Left lung (tissue), 14 donors: ENCODE measurements at regions of chr2 and their contacts with region 1.

Region 1: GRCh38 chr2:158024288-158024898 is 77.3 kb upstream of the UPP2 start:
- DNase-seq: no peak
- ATAC-seq: peak; percentile 84
- H3K4me3 ChIP-seq: no peak overlapping the region
- H3K27ac ChIP-seq: no peak overlapping the region
- H3K4me1 ChIP-seq: no peaks in the 10 kb centered on the region
- H3K27me3 ChIP-seq: no peaks in the 10 kb centered on the region
- CTCF ChIP-seq: peak; percentile 72 to 79

Region 2: DNA sequence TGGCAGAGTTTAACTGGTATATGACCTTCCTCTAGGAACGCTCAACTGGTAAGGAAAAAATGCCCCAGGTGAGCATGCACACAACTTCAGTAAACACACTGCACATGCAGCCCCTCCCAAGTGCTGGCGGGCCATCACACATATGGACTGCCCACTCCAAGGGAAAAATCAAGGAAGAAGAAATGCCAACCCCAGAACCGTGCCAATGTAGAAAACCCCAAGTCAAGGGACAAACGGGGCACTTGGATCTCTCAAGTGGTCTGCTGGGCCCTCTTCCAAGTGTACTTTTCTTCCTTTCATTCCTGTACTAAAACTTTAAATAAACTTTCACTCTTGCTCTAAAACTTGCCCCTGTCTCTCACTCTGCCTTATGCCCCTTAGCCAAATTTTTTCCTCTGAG is 71.8 kb before region 1 on chr2:
- intact Hi-C with region 1: no loop called
- DNase-seq: peak in 1 of 4 donors; percentile 37
- ATAC-seq: peak; percentile 64
- H3K4me3 ChIP-seq: no peak overlapping the region
- H3K27ac ChIP-seq: no peak overlapping the region
- H3K4me1 ChIP-seq: no peaks in the 10 kb centered on the region
- H3K27me3 ChIP-seq: no peaks in the 10 kb centered on the region
- CTCF ChIP-seq: no peak

Region 3: DNA sequence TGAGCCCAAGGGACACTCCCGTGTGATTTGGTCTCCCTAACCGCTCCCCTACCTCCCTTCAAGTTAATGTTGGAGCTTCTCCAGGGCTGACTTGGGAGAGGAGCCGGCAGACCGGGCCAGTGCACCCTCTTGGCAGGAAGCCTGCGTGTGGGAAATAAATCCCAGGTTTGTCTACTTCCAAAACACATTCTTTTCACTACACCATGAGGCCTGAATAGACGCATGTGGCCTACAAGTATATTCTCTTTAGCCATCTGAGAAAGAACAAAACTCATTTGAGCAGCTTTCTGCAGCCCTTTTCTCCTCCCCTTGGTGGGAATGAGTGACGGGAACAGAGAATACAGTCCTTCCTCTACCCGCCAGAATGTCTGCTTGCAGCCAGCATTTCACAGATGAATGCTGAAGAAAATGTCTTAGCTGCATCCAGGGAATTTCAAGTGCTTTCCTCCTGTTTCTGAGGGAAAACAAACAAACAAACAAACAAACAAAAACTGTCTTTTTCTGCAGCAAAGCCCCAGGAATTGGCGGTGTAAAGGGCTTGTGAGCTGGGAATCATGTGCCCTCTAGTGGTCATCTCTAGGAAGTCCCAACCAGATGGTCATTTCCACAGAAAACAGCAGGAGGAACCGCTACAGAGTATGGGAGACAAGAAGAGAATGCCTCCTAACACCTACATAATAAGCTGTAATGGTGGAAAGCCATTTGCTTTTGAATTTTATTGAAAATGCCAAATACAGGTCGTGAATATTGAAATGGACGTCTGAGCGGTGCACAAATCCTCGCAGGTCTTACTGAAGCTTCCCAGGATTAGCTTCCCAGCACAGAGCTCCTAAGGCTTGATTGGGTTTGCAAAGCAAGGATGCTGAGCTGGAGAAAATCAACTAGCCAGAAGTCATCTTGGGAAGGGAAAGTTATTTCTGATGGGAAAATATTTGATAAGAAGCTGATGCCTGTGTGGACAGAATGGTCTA is 729.5 kb after region 1 on chr2:
- intact Hi-C with region 1: loop called in 1 of 2 experiments (anchors 5 kb)
- DNase-seq: peak in 2 of 4 donors; percentile 69 to 80
- ATAC-seq: peak; percentile 96
- H3K4me3 ChIP-seq: no peak overlapping the region
- H3K27ac ChIP-seq: no peak overlapping the region
- H3K4me1 ChIP-seq: peaks cover 0 to 5% of the 10 kb centered on the region in 2 donors
- H3K27me3 ChIP-seq: no peaks in the 10 kb centered on the region
- CTCF ChIP-seq: peak; percentile 79 to 89